ENCODE measurements at regions of chr6 and their contacts with region 1.

Region 1: GRCh38 chr6:37222125-37222967 is 35.2 kb upstream of the TBC1D22B start:
- DNase-seq: peak in 1 of 2 donors; percentile 91
- H3K4me3 ChIP-seq: peak overlapping the region; percentile 67
- H3K27ac ChIP-seq: peak overlapping the region; percentile 34 to 48
- H3K4me1 ChIP-seq: peaks cover 0 to 6% of the 10 kb centered on the region in 2 donors
- H3K27me3 ChIP-seq: no peaks in the 10 kb centered on the region
- CTCF ChIP-seq: no peak

Region 2: GRCh38 chr6:37236921-37237320 is 14.6 kb after region 1 on chr6:
- intact Hi-C with region 1: loop called (anchors 2 kb)
- DNase-seq: no peak
- H3K4me3 ChIP-seq: no peak overlapping the region
- H3K27ac ChIP-seq: peak overlapping the region; percentile 20 to 29
- H3K4me1 ChIP-seq: peaks cover 0 to 26% of the 10 kb centered on the region in 2 donors
- H3K27me3 ChIP-seq: no peaks in the 10 kb centered on the region
- CTCF ChIP-seq: no peak

Measured in ascending aorta (tissue), 2 donors.